ENCODE measurements at regions of chr3 and their contacts with region 1.

Region 1: GRCh38 chr3:49093853-49094767 is at the start of gene QRICH1:
- DNase-seq: peak; percentile 96
- H3K4me3 Mint-ChIP-seq: peak within 1 kb of the TSS; percentile 83
- H3K27ac Mint-ChIP-seq: peak within 1 kb of the TSS; percentile 91
- H3K4me1 Mint-ChIP-seq: peaks cover 24% of the 10 kb centered on the region
- H3K27me3 Mint-ChIP-seq: no peaks in the 10 kb centered on the region
- total RNA-seq, gene QRICH1: 145 and 164 TPM in 2 replicates

Region 2: DNA sequence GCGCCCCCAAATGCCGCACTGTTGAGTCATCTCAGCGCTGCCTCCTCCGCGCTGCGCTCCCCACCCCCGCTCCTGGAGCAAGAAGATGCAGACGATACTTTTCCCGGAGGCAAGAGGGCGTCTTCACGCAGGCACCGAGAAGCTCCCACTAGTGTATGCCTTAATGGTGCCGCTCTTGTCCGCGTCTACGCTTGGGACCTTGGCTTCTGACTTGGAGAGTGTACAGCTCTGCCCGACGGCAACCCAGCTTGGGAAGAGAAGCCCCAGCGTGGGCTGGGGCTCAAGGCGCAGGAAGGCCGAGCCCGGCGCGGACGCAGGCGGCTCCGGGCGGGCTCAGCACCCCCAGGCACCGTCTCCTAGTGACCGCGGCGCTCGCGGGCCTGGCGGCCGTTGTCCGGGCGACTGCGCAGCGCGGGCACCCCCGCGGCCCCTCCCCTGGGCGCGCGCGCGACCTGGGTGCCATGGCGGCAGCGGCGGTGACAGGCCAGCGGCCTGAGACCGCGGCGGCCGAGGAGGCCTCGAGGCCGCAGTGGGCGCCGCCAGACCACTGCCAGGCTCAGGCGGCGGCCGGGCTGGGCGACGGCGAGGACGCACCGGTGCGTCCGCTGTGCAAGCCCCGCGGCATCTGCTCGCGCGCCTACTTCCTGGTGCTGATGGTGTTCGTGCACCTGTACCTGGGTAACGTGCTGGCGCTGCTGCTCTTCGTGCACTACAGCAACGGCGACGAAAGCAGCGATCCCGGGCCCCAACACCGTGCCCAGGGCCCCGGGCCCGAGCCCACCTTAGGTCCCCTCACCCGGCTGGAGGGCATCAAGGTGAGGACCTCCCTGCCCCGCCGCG is 104.1 kb before region 1 on chr3 and contains the start of gene P4HTM:
- intact Hi-C with region 1: loop called (anchors 2 kb)
- DNase-seq: peak; percentile 64
- H3K4me3 Mint-ChIP-seq: peak within 1 kb of the TSS; percentile 93
- H3K27ac Mint-ChIP-seq: peak within 1 kb of the TSS; percentile 88
- H3K4me1 Mint-ChIP-seq: peaks cover 37% of the 10 kb centered on the region
- H3K27me3 Mint-ChIP-seq: no peaks in the 10 kb centered on the region
- total RNA-seq, gene P4HTM: 37.8 and 39.1 TPM in 2 replicates

Region 3: DNA sequence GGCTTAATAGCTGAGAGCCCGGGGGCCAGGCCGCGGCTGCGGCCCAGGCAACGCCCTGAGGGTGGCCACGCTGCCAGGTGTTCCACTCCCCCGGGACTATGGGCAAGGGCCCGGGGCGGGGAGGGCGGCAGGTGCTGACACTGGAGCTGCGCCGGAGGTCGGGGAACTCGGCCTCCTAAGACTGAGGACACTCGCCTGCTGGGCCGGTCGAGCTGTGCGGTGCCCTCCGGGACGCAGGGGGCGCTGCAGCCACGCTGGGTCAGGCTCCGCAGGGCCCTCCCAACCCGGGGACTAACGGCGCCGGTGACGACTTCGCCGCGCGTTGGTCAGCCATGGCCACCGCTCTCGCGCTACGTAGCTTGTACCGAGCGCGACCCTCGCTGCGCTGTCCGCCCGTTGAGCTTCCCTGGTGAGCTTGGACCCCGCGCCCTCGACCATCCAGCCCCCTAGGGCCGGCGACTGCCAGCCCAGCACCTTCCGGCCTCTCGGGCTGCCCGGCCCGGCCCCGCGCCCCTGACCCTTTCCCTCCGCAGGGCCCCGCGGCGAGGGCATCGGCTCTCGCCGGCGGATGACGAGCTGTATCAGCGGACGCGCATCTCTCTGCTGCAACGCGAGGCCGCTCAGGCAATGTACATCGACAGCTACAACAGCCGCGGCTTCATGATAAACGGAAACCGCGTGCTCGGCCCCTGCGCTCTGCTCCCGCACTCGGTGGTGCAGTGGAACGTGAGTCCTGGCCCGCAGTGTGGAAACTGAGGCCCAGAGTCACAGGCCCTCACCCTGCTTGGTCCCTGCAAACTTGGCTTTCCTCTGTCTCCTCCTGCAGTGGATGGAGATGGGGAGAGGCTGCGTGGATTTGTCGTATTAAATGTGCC is 72.1 kb before region 1 on chr3 and contains the start of gene NDUFAF3:
- intact Hi-C with region 1: loop called (anchors 2 kb)
- DNase-seq: peak; percentile 91
- H3K4me3 Mint-ChIP-seq: peak within 1 kb of the TSS; percentile 95
- H3K27ac Mint-ChIP-seq: peak within 1 kb of the TSS; percentile 96
- H3K4me1 Mint-ChIP-seq: peaks cover 29% of the 10 kb centered on the region
- H3K27me3 Mint-ChIP-seq: no peaks in the 10 kb centered on the region
- total RNA-seq, gene NDUFAF3: 118 and 120 TPM in 2 replicates

Region 4: DNA sequence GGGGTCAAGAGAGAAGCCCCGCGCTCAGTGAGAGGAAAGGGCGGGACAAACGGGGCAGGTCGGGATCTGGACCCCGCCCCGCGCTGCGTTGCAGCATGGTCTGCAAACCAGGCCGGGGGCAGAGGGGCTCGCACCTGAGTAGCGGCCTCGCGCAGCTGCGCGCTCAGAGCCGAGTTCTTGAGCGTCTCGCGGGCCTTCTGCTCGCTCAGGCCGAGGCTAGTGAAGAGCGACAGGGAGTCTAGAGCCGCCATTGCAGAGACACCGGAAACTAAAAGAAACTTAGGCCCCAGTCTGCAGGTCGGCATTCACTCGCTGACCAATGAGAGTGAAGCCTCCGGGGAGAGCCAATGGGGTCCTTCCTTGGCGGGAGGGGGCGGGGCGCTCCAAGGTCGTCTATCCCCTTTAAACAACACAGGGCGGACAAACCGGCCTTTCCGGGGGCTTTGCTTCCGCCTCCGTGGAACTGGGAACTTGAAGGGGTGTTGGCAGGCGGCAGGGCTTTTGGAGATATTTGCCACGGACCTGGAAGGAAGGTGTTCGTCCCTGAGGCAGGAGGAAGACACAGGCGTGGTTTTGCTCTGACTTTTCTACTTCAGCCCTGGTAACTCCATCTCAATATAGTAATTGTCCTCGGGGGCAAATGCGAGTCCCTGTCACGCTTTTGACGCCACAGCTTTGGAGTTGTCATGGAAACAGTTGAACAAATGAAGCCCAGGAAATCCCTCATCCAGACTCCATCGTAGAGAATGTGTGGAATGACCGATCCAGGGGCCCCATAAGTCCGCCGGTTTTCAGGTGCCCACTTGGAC is 10.6 kb after region 1 on chr3 and contains the start of gene QARS1:
- intact Hi-C with region 1: loop called (anchors 1 kb)
- DNase-seq: peak; percentile 86
- H3K4me3 Mint-ChIP-seq: peak within 1 kb of the TSS; percentile 97
- H3K27ac Mint-ChIP-seq: peak within 1 kb of the TSS; percentile 93
- H3K4me1 Mint-ChIP-seq: peaks cover 18% of the 10 kb centered on the region
- H3K27me3 Mint-ChIP-seq: no peaks in the 10 kb centered on the region
- total RNA-seq, gene QARS1: 209 and 226 TPM in 2 replicates

Region 5: DNA sequence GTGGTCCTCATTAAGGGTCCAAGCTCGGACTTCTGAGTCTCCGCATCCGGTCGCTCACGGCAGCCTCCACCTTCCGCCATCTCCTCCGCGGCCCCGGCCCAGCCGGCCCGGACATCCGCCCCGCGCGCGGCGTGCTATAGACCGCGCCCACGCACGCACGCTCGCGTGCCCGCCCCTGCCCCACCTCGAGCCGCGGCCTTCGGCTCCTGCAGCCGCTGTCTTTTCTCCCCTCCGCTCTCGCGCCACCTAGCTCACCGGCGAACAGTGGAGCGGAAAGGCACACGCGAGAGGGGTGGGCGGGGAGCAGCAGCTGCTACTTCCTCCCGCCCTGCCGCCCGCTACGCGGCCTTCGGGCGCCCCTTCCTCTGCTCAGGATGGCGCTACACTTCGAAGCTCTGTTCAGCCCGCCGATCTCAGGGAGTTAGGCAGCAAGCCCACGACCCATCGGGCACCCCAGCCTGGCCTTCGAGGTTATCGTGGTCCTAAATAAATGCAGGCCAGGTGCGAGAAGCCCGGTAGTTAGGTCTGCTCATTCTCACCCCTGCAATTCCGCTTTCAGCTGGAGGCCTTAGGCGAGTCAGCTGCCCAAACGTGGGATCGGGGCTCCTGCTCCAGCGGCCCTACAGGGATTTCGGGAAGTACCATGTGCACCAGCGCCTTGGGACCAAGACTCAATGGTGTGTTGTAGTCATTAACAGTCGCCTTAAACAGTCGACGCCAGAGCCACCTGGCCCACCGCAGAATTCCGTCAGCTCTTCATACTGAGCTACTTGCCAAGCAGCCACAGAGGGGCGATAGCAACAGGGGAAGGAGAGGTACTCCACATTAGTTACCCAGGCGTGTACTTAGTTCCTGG is 246.1 kb after region 1 on chr3 and contains the start of gene USP4:
- intact Hi-C with region 1: loop called (anchors 2 kb)
- DNase-seq: peak; percentile 91
- H3K4me3 Mint-ChIP-seq: peak within 1 kb of the TSS; percentile 95
- H3K27ac Mint-ChIP-seq: peak within 1 kb of the TSS; percentile 96
- H3K4me1 Mint-ChIP-seq: peaks cover 36% of the 10 kb centered on the region
- H3K27me3 Mint-ChIP-seq: no peaks in the 10 kb centered on the region
- total RNA-seq, gene USP4: 78.6 and 82.7 TPM in 2 replicates

Measured in activated T-helper 2 cell treated with anti-CD3 and anti-CD28 coated beads, Interferon-gamma antibody, Interleukin-2, Interleukin-4, amounts not matched to agents 10 μg/mL and 5 μg/mL and 100 μg/mL, durations not matched to agents 14 hours and 24 hours and 36 hours (primary cell).